ENCODE measurements at regions of chr3 and their contacts with region 1.

Region 1: DNA sequence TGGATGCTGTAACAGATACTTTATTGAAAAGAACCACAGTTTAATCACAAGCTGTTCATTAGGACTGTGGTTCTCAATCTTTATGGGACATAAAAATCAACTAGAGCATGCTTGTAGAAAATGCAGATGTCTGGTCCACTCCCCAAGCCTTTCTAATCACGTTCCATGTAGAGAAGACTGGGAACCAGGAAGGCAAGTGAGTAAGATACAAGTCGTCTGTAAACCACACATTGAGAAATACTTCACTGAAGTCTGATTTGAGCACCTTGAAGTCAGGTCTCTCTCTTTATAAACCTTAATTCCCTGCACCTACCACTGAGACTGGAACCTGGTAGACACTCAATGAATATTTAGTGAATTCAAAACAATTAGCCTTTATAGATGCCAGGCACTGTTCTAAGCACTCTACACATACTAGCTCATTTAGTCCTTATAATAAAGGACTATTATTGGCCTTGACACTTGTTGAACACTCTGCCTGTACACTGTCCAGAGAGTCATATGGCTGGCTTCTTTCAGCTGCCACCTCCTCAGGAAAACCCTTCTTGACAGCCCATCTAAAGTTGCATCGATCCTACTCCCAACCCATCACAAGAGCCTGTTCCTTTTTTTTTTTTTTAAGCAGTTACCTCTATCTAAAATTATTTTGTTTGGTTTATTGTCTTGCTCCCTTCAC is 59.0 kb upstream of the CMSS1 start:
- DNase-seq: no peak
- H3K4me3 ChIP-seq: no peak overlapping the region
- H3K27ac ChIP-seq: no peak overlapping the region
- H3K4me1 ChIP-seq: no peaks in the 10 kb centered on the region
- H3K27me3 ChIP-seq: peaks cover 9% of the 10 kb centered on the region; the same call in 1 of the 2 replicates
- CTCF ChIP-seq: no peak

Region 2: DNA sequence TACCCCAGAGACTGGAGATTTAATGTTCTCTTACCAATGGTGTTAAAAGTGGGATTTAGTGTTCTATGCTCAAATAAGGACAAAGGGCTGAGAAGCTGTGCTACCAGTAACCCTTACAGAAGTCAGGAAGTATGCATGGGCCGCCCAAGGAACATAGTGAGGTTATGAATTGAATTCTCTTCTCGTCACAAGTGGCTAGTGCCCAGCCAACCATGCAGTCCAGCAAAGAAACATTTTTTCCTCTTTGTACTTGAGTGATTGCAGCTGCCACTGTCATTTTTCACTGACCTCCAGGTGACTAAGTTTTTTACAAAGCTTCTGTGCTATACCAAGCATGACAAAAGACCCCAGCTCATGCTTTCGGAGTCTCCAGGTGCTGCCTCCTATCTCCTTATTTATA is 746.6 kb before region 1 on chr3:
- CTCF ChIA-PET with region 1: interaction called, 13 read pairs
- POLR2A ChIA-PET with region 1: no interaction called
- intact Hi-C with region 1: no loop called
- DNase-seq: no peak
- H3K4me3 ChIP-seq: no peak overlapping the region
- H3K27ac ChIP-seq: no peak overlapping the region
- H3K4me1 ChIP-seq: peaks cover 19% of the 10 kb centered on the region
- H3K27me3 ChIP-seq: no peaks in the 10 kb centered on the region
- CTCF ChIP-seq: no peak

Region 3: DNA sequence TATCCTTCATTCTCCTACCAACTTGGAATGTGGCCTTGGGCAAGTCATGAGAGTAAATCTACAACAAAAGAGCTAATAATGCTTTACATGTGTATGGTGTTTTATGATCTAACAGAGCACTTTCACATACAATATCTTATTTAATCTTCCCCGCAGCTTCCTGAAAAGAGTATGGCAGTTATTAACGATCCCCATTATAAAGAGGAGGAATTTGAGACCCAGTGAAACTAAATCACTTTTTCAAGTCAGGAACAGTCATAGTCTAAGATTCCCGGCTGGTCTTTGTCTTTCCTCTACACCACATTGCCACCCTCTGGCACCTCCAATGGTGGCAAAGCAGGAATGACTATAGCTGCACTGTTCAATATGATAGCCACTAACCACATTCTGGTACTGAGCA is 10.7 kb before region 1 on chr3:
- CTCF ChIA-PET with region 1: no interaction called
- POLR2A ChIA-PET with region 1: no interaction called
- intact Hi-C with region 1: no loop called
- DNase-seq: peak; percentile 33 to 39
- H3K4me3 ChIP-seq: no peak overlapping the region
- H3K27ac ChIP-seq: no peak overlapping the region
- H3K4me1 ChIP-seq: no peaks in the 10 kb centered on the region
- H3K27me3 ChIP-seq: no peaks in the 10 kb centered on the region
- CTCF ChIP-seq: peak; percentile 45; the same call in 1 of the 2 replicates

Region 4: DNA sequence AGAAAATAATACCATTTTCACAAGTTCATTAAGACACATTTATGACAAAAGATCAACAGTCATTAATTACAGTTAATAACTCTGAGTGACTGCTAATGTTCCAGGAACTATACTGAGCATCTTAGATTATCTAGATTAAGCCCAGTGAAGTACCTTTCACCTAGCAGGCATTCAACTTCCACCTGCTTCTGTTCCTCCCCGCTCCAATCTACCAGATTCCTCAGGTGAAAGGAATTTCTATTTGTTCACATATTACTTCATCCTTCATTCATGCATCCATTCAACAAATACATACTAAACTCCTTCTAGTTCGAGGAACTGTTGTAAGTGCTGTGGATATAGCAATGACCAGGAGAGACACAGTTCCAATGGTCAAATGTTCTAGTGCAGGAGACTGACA is 216.3 kb after region 1 on chr3:
- CTCF ChIA-PET with region 1: no interaction called
- POLR2A ChIA-PET with region 1: no interaction called
- intact Hi-C with region 1: no loop called
- DNase-seq: peak in 1 of 2 experiments; percentile 83
- H3K4me3 ChIP-seq: no peak overlapping the region
- H3K27ac ChIP-seq: no peak overlapping the region
- H3K4me1 ChIP-seq: peaks cover 10% of the 10 kb centered on the region
- H3K27me3 ChIP-seq: no peaks in the 10 kb centered on the region
- CTCF ChIP-seq: no peak

Measured in PC-9 (cell line).